ENCODE measurements at regions of chr10 and their contacts with region 1.

Region 1: DNA sequence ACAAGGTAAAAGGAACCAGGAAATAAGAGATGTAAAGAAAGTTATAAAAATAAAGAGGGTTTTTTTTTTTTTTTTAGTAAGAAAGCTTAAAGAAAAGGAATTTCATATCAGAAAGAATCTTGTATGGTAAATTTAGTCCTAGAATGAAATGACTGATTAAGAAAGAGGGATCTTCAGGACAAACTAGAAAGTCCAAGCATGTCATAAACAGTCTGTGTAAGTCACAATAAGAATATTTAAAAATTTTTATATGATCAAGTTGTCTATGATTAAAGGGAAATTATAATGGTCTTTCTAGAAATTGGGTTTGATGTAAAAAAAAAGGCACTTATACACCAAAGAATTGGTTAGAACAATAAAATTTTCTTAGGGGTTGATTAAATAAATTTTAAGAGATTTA is 289.5 kb downstream of the XPNPEP1 start:
- DNase-seq: no peak
- H3K4me3 ChIP-seq: no peak overlapping the region
- CTCF ChIP-seq: no peak

Region 2: GRCh38 chr10:109556399-109556798 is 77.4 kb before region 1 on chr10:
- in situ Hi-C with region 1: loop called (anchors 5 kb)
- DNase-seq: no peak
- H3K4me3 ChIP-seq: no peak overlapping the region
- CTCF ChIP-seq: no peak

Region 3: GRCh38 chr10:109714869-109715268 is 81.0 kb after region 1 on chr10:
- in situ Hi-C with region 1: no loop called
- DNase-seq: no peak
- H3K4me3 ChIP-seq: no peak overlapping the region
- CTCF ChIP-seq: no peak